ENCODE measurements at regions of chr3 and their contacts with region 1.

Region 1: DNA sequence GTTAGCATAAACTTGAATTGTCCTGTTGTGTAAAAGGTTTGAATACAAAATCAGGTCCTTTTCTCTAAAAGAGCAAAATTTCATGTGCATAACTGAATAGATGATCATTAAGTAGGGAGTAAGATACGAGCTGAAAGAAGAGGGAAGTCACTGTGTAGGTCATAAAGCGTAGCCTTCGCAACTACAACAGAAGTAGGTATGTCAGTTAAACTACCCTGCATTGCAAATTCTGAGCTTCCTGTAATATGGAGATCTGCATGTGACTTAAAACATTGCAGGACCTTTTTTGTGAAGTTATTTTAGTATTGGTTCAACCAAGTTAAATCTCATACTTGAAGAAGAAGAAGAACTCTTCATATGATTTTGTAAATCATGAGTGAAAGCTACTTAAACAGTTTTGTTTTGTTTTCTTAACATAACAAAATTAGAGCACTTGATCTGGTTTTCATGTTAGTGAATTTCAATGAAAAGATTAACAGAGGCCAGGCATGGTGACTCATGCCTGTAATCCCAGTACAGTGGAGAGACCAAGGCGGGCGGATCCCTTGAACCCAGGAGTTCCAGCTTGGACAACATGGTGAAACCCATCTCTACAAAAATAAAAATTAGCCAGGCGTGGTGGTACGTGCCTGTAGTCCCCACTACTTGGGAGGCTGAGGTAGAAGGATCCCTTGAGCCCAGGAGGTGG is 26.4 kb downstream of the ARMC8 start:
- DNase-seq: no peak
- H3K4me3 ChIP-seq: no peak overlapping the region
- H3K27me3 ChIP-seq: no peaks in the 10 kb centered on the region
- CTCF ChIP-seq: no peak

Region 2: DNA sequence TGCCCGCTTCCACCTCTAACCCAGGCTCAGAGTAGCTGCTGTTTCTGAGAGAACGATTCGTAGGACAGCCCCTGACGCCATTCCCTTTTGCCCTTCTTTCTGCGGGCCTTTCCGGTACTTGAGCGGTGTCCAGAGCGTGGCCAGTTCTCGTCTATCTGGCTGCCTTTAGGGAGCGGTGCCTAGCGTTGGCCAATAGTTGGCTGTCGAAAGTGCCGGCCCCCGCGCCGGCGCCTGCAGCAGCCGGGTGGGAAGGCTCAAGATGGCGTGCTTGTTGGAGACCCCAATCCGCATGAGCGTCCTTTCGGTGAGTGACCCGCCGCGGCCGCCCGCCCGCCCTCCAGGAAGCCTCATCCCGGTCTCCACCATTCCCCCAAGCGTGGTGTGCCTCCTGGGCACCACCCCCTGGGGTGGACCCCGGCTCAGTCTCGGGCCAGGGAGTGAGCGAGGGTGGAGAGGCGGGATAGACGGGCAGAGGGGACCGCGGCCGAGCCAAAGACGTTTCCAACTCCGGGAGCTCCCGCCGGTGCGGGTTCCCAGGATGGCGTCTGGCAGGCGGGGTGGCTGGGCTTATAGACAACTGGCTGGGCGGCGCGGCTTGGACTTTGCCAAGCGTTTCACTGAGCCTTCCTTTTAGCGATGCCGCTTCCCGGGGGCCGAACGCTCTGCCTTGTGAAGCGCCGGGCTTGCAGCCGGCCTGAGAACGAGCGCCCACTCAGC is 26.1 kb before region 1 on chr3 and contains the start of gene ARMC8:
- CTCF ChIA-PET with region 1: no interaction called
- POLR2A ChIA-PET with region 1: interaction called, 13 read pairs
- DNase-seq: peak; percentile 17
- H3K4me3 ChIP-seq: peak within 1 kb of the TSS; percentile 95
- H3K27me3 ChIP-seq: no peaks in the 10 kb centered on the region; the same call in 1 of the 2 replicates
- CTCF ChIP-seq: no peak
- polyA plus RNA-seq, gene ARMC8: 52.7 and 53.5 TPM in 2 replicates

Measured in BJ (cell line).